Ascending aorta (tissue), 2 donors: ENCODE measurements at regions of chr12 and their contacts with region 1.

Region 1: GRCh38 chr12:14769969-14770495 is 33.2 kb downstream of the WBP11 start:
- DNase-seq: peak; percentile 41 to 90
- H3K4me3 ChIP-seq: peak overlapping the region; percentile 75 to 81
- H3K27ac ChIP-seq: peak overlapping the region; percentile 88 to 98
- H3K4me1 ChIP-seq: peaks cover 0 to 7% of the 10 kb centered on the region in 2 donors
- H3K27me3 ChIP-seq: no peaks in the 10 kb centered on the region
- CTCF ChIP-seq: peak; percentile 78 to 93 (median 78)

Region 2: GRCh38 chr12:14365294-14366208 is 404.5 kb before region 1 on chr12 and contains the start of gene ATF7IP:
- intact Hi-C with region 1: loop called (anchors 5 kb)
- DNase-seq: peak; percentile 93 to 98
- H3K4me3 ChIP-seq: peak within 1 kb of the TSS; percentile 73 to 84
- H3K27ac ChIP-seq: peak within 1 kb of the TSS; percentile 96 to 98
- H3K4me1 ChIP-seq: peaks cover 0 to 5% of the 10 kb centered on the region in 2 donors
- H3K27me3 ChIP-seq: no peaks in the 10 kb centered on the region
- CTCF ChIP-seq: peak in 1 of 3 experiments; percentile 18
- total RNA-seq, gene ATF7IP: 58.2 TPM

Region 3: GRCh38 chr12:14803011-14803829 is 33.2 kb after region 1 on chr12 and contains the starts of genes C12orf60 and WBP11:
- intact Hi-C with region 1: loop called (anchors 2 kb)
- DNase-seq: peak; percentile 95 to 98
- H3K4me3 ChIP-seq: peak within 1 kb of the TSS; percentile 84 to 98
- H3K27ac ChIP-seq: peak within 1 kb of the TSS; percentile 90 to 97
- H3K4me1 ChIP-seq: peaks cover 3 to 9% of the 10 kb centered on the region in 2 donors
- H3K27me3 ChIP-seq: no peaks in the 10 kb centered on the region
- CTCF ChIP-seq: no peak
- total RNA-seq, gene C12orf60: not detected
- total RNA-seq, gene WBP11: 6.7 TPM

Region 4: GRCh38 chr12:14828896-14829295 is 58.9 kb after region 1 on chr12:
- intact Hi-C with region 1: no loop called
- DNase-seq: no peak
- H3K4me3 ChIP-seq: no peak overlapping the region
- H3K27ac ChIP-seq: no peak overlapping the region
- H3K4me1 ChIP-seq: no peaks in the 10 kb centered on the region
- H3K27me3 ChIP-seq: no peaks in the 10 kb centered on the region
- CTCF ChIP-seq: no peak

Region 5: GRCh38 chr12:14948672-14949071 is 178.6 kb after region 1 on chr12:
- intact Hi-C with region 1: loop called (anchors 5 kb)
- DNase-seq: peak in 1 of 2 donors; percentile 81
- H3K4me3 ChIP-seq: peak overlapping the region in 1 of 2 donors; percentile 50
- H3K27ac ChIP-seq: peak overlapping the region; percentile 91 to 96
- H3K4me1 ChIP-seq: peaks cover 9 to 56% of the 10 kb centered on the region in 2 donors
- H3K27me3 ChIP-seq: no peaks in the 10 kb centered on the region
- CTCF ChIP-seq: no peak

Region 6: DNA sequence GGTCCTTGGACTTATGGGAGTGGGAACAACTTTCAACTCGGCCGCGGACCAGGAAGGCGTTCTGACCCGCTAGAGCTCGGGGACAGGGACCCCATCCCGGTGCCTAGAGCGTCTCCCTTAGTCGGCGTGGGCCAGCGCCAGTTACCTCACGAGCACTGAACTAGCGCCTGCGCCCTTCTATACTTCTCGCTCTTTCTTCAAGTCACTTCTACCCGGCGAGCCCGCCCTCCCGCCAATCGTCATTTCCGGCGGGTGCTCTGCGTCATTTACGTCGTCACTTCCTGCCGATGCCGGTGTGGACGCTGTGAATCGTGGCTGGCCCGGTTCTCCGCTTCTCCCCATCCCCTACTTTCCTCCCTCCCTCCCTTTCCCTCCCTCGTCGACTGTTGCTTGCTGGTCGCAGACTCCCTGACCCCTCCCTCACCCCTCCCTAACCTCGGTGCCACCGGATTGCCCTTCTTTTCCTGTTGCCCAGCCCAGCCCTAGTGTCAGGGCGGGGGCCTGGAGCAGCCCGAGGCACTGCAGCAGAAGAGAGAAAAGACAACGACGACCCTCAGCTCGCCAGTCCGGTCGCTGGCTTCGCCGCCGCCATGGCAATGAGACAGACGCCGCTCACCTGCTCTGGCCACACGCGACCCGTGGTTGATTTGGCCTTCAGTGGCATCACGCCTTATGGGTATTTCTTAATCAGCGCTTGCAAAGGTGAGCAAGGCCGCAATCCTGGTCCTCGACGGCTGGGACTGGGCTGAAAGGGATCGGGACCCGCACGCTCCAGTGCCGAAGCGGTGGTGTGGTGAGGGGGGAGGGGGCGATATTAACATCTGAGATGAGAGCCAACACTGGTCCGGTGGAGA is 1112.3 kb after region 1 on chr12 and contains the start of gene STRAP:
- intact Hi-C with region 1: loop called (anchors 1 kb)
- DNase-seq: peak; percentile 89 to 99
- H3K4me3 ChIP-seq: peak within 1 kb of the TSS; percentile 75 to 85
- H3K27ac ChIP-seq: peak within 1 kb of the TSS; percentile 97
- H3K4me1 ChIP-seq: peaks cover 3 to 24% of the 10 kb centered on the region in 2 donors
- H3K27me3 ChIP-seq: no peaks in the 10 kb centered on the region
- CTCF ChIP-seq: peak in 1 of 3 experiments; percentile 8
- total RNA-seq, gene STRAP: 17.1 TPM